Mammary epithelial cell (primary cell): ENCODE measurements at regions of chr9 and their contacts with region 1.

Region 1: DNA sequence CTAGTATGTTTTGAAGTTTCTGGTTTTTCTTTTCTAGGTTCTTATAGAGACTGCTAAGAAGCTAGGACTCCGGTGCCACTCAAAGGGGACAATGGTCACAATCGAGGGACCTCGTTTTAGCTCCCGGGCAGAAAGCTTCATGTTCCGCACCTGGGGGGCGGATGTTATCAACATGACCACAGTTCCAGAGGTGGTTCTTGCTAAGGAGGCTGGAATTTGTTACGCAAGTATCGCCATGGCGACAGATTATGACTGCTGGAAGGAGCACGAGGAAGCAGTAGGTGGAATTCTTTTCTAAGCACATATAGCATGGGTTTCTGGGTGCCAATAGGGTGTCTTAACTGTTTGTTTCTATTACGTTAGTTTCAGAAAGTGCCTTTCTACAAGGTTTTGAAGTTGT is 52.2 kb downstream of the MTAP start:
- DNase-seq: peak; percentile 92
- H3K4me3 ChIP-seq: no peak overlapping the region
- H3K27ac ChIP-seq: peak overlapping the region; percentile 71
- H3K4me1 ChIP-seq: peaks cover 22% of the 10 kb centered on the region
- H3K27me3 ChIP-seq: no peaks in the 10 kb centered on the region
- CTCF ChIP-seq: no peak

Region 2: GRCh38 chr9:21770877-21771560 is 83.6 kb before region 1 on chr9:
- CTCF ChIA-PET with region 1: no interaction called
- dilution Hi-C with region 1: no loop called
- in situ Hi-C with region 1: no loop called
- intact Hi-C with region 1: no loop called
- DNase-seq: peak; percentile 83
- H3K4me3 ChIP-seq: no peak overlapping the region
- H3K27ac ChIP-seq: peak overlapping the region; percentile 84
- H3K4me1 ChIP-seq: peaks cover 18% of the 10 kb centered on the region
- H3K27me3 ChIP-seq: no peaks in the 10 kb centered on the region
- CTCF ChIP-seq: no peak

Region 3: GRCh38 chr9:21836437-21837161 is 18.0 kb before region 1 on chr9:
- CTCF ChIA-PET with region 1: no interaction called
- dilution Hi-C with region 1: no loop called
- in situ Hi-C with region 1: no loop called
- intact Hi-C with region 1: loop called (anchors 2 kb)
- DNase-seq: peak; percentile 99
- H3K4me3 ChIP-seq: no peak overlapping the region
- H3K27ac ChIP-seq: peak overlapping the region; percentile 80
- H3K4me1 ChIP-seq: peaks cover 62% of the 10 kb centered on the region
- H3K27me3 ChIP-seq: no peaks in the 10 kb centered on the region
- CTCF ChIP-seq: no peak